Calu3 (cell line): ENCODE measurements at regions of chr3 and their contacts with region 1.

Region 1: DNA sequence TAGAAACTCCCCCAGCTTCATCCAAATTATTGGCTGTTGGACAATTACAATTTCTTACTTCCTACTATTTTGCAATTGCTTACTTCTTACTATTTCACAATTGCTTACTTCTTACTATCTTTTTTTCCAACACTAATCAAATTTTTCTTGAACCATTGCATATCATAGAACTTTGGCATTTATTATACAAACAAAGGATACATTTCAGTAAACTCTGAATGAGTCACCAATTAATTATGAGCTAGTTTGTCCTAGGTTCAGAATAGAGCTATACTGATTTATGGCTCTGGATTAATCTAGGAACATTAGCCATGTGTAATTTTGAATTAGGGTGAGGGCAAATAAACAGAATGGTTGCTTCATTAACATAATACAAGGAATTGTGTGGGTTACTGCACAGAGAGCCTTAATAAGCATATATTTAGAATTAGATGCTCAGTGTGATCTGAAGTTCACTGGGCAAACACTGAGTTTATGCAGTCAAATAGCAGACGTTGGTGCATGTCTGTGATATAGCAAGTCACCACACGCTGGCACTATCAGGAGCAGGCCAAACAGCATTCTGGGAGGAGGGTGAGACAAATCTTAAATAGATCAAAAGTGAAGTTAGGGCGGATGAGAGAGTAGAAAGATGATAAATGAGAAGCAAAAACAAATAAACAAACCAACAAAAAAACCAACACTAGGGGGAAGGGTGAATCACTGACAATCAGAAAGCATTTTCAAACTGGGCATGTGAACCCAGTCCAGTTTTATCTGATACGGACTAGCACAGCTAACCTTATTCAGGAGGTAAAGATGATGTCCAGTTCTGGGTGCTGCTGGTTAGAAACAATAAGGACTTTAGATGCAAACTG is 21.5 kb downstream of the GABRR3 start:
- DNase-seq: no peak
- H3K4me3 Mint-ChIP-seq: no peak overlapping the region
- H3K27ac Mint-ChIP-seq: peak overlapping the region; percentile 13
- H3K4me1 Mint-ChIP-seq: peaks cover 23% of the 10 kb centered on the region
- H3K27me3 Mint-ChIP-seq: no peaks in the 10 kb centered on the region
- CTCF ChIP-seq: no peak

Region 2: DNA sequence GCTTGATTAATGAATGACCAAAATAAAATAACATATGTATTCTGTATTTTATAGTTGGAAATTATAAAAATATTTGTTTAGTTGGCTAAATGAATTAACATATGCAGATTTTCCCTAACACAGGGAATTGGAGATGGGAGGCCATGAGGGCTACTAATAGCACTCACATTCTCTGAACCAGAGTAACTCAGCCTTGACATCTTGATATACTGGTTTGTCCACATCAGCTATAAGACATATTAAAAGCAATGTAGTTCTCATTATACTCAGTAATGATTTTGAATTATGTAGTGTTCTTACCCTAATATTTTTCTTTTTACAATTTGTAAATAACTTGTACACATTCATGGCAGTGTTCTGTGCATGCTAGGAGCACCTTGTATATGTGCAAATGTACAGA is 943.3 kb before region 1 on chr3:
- CTCF ChIA-PET with region 1: no interaction called
- intact Hi-C with region 1: no loop called
- DNase-seq: no peak
- H3K4me3 Mint-ChIP-seq: no peak overlapping the region
- H3K27ac Mint-ChIP-seq: no peak overlapping the region
- H3K4me1 Mint-ChIP-seq: no peaks in the 10 kb centered on the region
- H3K27me3 Mint-ChIP-seq: no peaks in the 10 kb centered on the region
- CTCF ChIP-seq: no peak

Region 3: DNA sequence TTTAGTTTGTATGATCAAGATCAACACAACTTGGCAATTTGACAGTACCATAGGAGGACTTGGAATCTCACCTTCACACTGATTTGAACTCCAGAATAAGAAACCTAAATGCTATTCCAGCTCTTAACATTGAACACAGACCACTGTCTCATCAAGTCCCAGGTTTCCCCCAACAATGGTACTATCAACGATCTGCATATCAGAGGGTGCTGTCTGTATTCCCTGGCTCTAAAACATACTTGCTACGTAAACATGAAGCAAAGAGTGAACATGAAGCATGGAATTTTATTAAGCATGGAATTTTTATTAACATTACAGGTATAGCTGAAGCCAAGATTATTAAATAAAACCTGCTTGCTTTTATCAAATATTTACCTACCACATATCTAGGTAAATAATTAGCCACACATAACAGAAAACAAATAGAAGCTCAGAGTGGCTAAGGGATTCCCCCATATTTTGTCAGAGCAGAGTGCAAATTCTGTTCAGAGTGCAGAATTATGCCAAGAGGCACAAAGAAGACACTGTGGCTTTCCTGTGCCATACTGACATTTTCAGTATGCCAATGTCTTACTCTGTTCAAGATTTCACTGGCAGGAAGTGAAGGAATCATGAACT is 19.2 kb before region 1 on chr3:
- CTCF ChIA-PET with region 1: no interaction called
- intact Hi-C with region 1: loop called (anchors 2 kb)
- DNase-seq: no peak
- H3K4me3 Mint-ChIP-seq: no peak overlapping the region
- H3K27ac Mint-ChIP-seq: no peak overlapping the region
- H3K4me1 Mint-ChIP-seq: peaks cover 17% of the 10 kb centered on the region
- H3K27me3 Mint-ChIP-seq: no peaks in the 10 kb centered on the region
- CTCF ChIP-seq: no peak

Region 4: DNA sequence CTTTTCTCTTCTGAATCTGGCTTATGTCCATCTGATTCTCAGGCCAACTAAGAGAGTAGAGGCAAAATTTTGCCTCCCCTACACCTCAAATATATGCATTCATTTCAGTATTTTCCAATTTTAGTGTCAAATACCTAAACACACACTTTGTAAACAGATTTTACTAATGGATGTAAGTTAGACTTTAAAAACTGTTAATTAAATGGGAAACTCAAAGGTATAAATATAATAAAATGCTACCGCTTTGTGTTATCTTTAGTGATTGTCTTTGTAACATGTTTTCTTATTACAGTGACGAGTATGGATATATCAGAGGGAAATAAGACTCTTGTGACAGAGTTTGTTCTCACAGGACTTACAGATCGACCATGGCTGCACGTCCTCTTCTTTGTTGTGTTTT is 73.2 kb after region 1 on chr3 and contains the start of gene OR5AC2:
- CTCF ChIA-PET with region 1: no interaction called
- intact Hi-C with region 1: no loop called
- DNase-seq: no peak
- H3K4me3 Mint-ChIP-seq: no peak within 1 kb of the TSS
- H3K27ac Mint-ChIP-seq: no peak within 1 kb of the TSS
- H3K4me1 Mint-ChIP-seq: no peaks in the 10 kb centered on the region
- H3K27me3 Mint-ChIP-seq: no peaks in the 10 kb centered on the region
- CTCF ChIP-seq: no peak
- total RNA-seq, gene OR5AC2: not detected in 2 replicates

Region 5: DNA sequence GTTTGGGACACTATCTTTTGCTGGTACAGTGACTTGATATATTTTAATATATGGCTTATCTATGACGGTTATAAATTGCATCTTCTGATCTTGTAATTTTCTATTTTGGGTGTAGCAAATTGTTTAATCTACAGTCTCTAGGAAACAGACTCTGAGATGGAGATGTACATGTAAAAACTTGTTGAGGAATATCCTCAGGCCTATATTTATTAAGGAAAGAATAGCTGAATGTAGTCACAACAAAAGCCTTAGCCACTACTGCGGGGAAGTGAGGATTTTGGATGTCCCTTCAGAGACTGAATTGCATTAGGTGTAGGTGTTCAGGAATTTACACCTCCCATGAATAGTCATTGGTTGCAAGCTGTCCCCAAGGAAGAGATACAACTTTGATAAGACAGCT is 363.0 kb after region 1 on chr3:
- CTCF ChIA-PET with region 1: no interaction called
- intact Hi-C with region 1: no loop called
- DNase-seq: no peak
- H3K4me3 Mint-ChIP-seq: no peak overlapping the region
- H3K27ac Mint-ChIP-seq: no peak overlapping the region
- H3K4me1 Mint-ChIP-seq: no peaks in the 10 kb centered on the region
- H3K27me3 Mint-ChIP-seq: no peaks in the 10 kb centered on the region
- CTCF ChIP-seq: no peak